ENCODE measurements at regions of chr3 and their contacts with region 1.

Region 1: DNA sequence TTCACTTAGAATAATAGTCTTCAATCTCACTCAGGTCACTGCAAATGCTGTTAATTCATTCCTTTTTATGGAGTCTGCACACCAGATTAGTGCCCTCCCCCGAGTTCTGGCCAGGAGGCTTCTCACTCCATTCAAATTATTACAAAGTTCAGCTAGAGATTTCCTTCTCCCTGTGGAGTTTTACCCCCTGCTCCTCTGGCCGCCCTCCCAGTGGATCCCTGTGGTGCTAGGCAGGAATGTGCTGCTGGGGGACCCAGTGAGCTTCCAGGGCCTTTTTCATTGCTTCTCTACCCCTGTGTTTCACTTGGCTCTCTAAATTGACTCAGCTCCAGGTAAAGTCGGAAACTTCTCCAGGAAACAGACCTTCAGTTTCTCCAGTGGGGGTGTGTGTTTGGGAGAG is 42.7 kb upstream of the CD200R1L start:
- DNase-seq: no peak
- ATAC-seq: no peak
- H3K4me3 ChIP-seq: no peak overlapping the region
- H3K27ac ChIP-seq: no peak overlapping the region
- H3K4me1 ChIP-seq: no peaks in the 10 kb centered on the region
- H3K27me3 ChIP-seq: peaks cover 0 to 2% of the 10 kb centered on the region in 2 experiments; a peak in 1 of 4 replicates
- CTCF ChIP-seq: no peak
- EP300 ChIP-seq: no peak
- POLR2A ChIP-seq: no peak
- RAD21 ChIP-seq: no peak

Region 2: GRCh38 chr3:112900113-112900512 is 10.8 kb after region 1 on chr3:
- CTCF ChIA-PET with region 1: interaction called, 3 read pairs
- POLR2A ChIA-PET with region 1: no interaction called
- RAD21 ChIA-PET with region 1: no interaction called
- SMC1A ChIA-PET with region 1: interaction called, 12 read pairs
- in situ Hi-C with region 1: no loop called
- intact Hi-C with region 1: no loop called
- DNase-seq: no peak
- ATAC-seq: no peak
- H3K4me3 ChIP-seq: no peak overlapping the region
- H3K27ac ChIP-seq: no peak overlapping the region
- H3K4me1 ChIP-seq: no peaks in the 10 kb centered on the region
- H3K27me3 ChIP-seq: no peaks in the 10 kb centered on the region
- CTCF ChIP-seq: no peak
- EP300 ChIP-seq: no peak
- POLR2A ChIP-seq: no peak
- RAD21 ChIP-seq: no peak

Measured in GM12878 (cell line).